CD4-positive, alpha-beta T cell (primary cell): ENCODE measurements at regions of chrX and their contacts with region 1.

Region 1: GRCh38 chrX:19747652-19748610 is 139.5 kb downstream of the SH3KBP1 start:
- DNase-seq: peak; percentile 61 to 89 (median 76)
- ATAC-seq: peak; percentile 81
- H3K4me3 ChIP-seq: no peak overlapping the region
- H3K4me3 Mint-ChIP-seq: peak overlapping the region; percentile 78
- H3K27ac ChIP-seq: peak overlapping the region; percentile 78 to 81
- H3K27ac Mint-ChIP-seq: peak overlapping the region; percentile 100
- H3K4me1 ChIP-seq: peaks cover 91% of the 10 kb centered on the region
- H3K4me1 Mint-ChIP-seq: peaks cover 100% of the 10 kb centered on the region
- H3K27me3 ChIP-seq: no peaks in the 10 kb centered on the region
- H3K27me3 Mint-ChIP-seq: no peaks in the 10 kb centered on the region
- CTCF ChIP-seq: no peak

Region 2: GRCh38 chrX:18654875-18655836 is 1092.8 kb before region 1 on chrX:
- CTCF ChIA-PET with region 1: no interaction called
- POLR2A ChIA-PET with region 1: no interaction called
- intact Hi-C with region 1: no loop called
- DNase-seq: no peak
- ATAC-seq: no peak
- H3K4me3 ChIP-seq: no peak overlapping the region
- H3K4me3 Mint-ChIP-seq: no peak overlapping the region
- H3K27ac ChIP-seq: no peak overlapping the region
- H3K27ac Mint-ChIP-seq: no peak overlapping the region
- H3K4me1 ChIP-seq: no peaks in the 10 kb centered on the region
- H3K4me1 Mint-ChIP-seq: no peaks in the 10 kb centered on the region
- H3K27me3 ChIP-seq: no peaks in the 10 kb centered on the region
- H3K27me3 Mint-ChIP-seq: no peaks in the 10 kb centered on the region
- CTCF ChIP-seq: no peak

Region 3: GRCh38 chrX:19682712-19683331 is 65.1 kb before region 1 on chrX:
- CTCF ChIA-PET with region 1: no interaction called
- POLR2A ChIA-PET with region 1: no interaction called
- intact Hi-C with region 1: loop called in 1 of 2 experiments (anchors 5 kb)
- DNase-seq: peak; percentile 51 to 93 (median 64)
- ATAC-seq: peak; percentile 79
- H3K4me3 ChIP-seq: no peak overlapping the region
- H3K4me3 Mint-ChIP-seq: peak overlapping the region; percentile 49
- H3K27ac ChIP-seq: peak overlapping the region; percentile 73 to 87
- H3K27ac Mint-ChIP-seq: peak overlapping the region; percentile 91
- H3K4me1 ChIP-seq: peaks cover 53% of the 10 kb centered on the region
- H3K4me1 Mint-ChIP-seq: peaks cover 84% of the 10 kb centered on the region
- H3K27me3 ChIP-seq: no peaks in the 10 kb centered on the region
- H3K27me3 Mint-ChIP-seq: no peaks in the 10 kb centered on the region
- CTCF ChIP-seq: no peak

Region 4: GRCh38 chrX:19776753-19777152 is 28.8 kb after region 1 on chrX:
- CTCF ChIA-PET with region 1: interaction called, 3 read pairs
- POLR2A ChIA-PET with region 1: interaction called, 15 read pairs
- intact Hi-C with region 1: loop called in 1 of 2 experiments (anchors 5 kb)
- DNase-seq: peak in 6 of 14 experiments; percentile 12 to 70 (median 50)
- ATAC-seq: peak; percentile 63
- H3K4me3 ChIP-seq: no peak overlapping the region
- H3K4me3 Mint-ChIP-seq: peak overlapping the region; percentile 47
- H3K27ac ChIP-seq: peak overlapping the region in 1 of 2 donors; percentile 24
- H3K27ac Mint-ChIP-seq: peak overlapping the region; percentile 79
- H3K4me1 ChIP-seq: peaks cover 63% of the 10 kb centered on the region
- H3K4me1 Mint-ChIP-seq: peaks cover 61% of the 10 kb centered on the region
- H3K27me3 ChIP-seq: no peaks in the 10 kb centered on the region
- H3K27me3 Mint-ChIP-seq: no peaks in the 10 kb centered on the region
- CTCF ChIP-seq: no peak

Region 5: GRCh38 chrX:19799319-19800182 is 51.6 kb after region 1 on chrX:
- CTCF ChIA-PET with region 1: no interaction called
- POLR2A ChIA-PET with region 1: interaction called, 23 read pairs
- intact Hi-C with region 1: loop called (anchors 5 kb)
- DNase-seq: peak in 13 of 14 experiments; percentile 21 to 79 (median 48)
- ATAC-seq: peak; percentile 82
- H3K4me3 ChIP-seq: peak overlapping the region; percentile 75
- H3K4me3 Mint-ChIP-seq: peak overlapping the region; percentile 84
- H3K27ac ChIP-seq: peak overlapping the region; percentile 72 to 74
- H3K27ac Mint-ChIP-seq: peak overlapping the region; percentile 90
- H3K4me1 ChIP-seq: peaks cover 64% of the 10 kb centered on the region
- H3K4me1 Mint-ChIP-seq: peaks cover 74% of the 10 kb centered on the region
- H3K27me3 ChIP-seq: no peaks in the 10 kb centered on the region
- H3K27me3 Mint-ChIP-seq: no peaks in the 10 kb centered on the region
- CTCF ChIP-seq: no peak

Region 6: GRCh38 chrX:19840899-19841648 is 93.1 kb after region 1 on chrX:
- CTCF ChIA-PET with region 1: interaction called, 5 read pairs
- POLR2A ChIA-PET with region 1: interaction called, 30 read pairs
- intact Hi-C with region 1: loop called in 1 of 2 experiments (anchors 5 kb)
- DNase-seq: peak in 10 of 14 experiments; percentile 2 to 78 (median 25)
- ATAC-seq: peak; percentile 75
- H3K4me3 ChIP-seq: no peak overlapping the region
- H3K4me3 Mint-ChIP-seq: peak overlapping the region; percentile 68
- H3K27ac ChIP-seq: peak overlapping the region; percentile 30 to 34
- H3K27ac Mint-ChIP-seq: peak overlapping the region; percentile 87
- H3K4me1 ChIP-seq: peaks cover 46% of the 10 kb centered on the region
- H3K4me1 Mint-ChIP-seq: peaks cover 69% of the 10 kb centered on the region
- H3K27me3 ChIP-seq: no peaks in the 10 kb centered on the region
- H3K27me3 Mint-ChIP-seq: no peaks in the 10 kb centered on the region
- CTCF ChIP-seq: no peak